ENCODE measurements at regions of chr10 and their contacts with region 1.

Region 1: DNA sequence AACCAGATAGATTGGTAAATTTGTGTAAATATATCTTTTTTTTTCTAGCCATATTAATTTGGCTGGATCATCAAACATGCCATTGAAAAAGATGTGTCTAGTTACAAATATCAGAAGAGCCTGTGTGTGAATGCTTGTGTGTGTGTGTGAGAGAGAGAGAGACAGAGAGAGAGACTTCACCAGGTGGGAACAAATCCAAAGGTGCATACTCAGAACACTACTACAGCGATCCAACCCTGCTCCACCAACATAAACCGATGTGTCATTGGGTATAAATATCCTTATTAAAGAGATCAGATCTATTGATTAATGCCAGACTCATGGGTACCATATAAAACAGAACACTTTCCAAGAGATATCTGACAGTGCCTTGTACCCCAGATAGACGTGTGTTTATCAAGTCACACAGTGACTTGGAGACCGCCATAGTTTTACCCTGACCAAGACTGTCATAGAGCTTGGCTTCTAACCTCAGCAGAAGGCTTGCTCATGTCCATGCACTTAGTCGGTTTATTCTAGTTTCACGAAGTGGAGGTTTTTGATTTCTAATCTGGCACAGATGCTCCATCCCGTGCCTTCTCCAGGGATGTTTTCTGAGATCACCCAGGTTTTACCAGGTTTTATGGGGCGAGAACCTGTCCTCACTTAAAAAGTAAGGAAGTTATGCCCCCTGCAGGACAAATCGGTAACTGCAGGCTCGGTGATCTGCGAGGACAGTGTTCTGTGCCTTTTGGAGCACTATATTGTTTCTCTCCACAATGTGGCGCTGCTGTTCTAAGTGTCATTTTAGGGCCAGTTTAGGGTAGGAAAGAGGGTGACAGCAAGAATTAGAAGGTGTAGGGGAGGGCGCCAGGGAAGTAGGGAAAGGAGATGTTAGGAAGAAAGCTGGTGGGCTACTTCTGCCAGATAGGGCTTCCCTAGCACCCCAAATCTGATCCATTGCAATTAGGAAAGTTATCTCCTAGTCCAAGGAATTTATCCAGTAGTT is 29.3 kb upstream of the WNT8B start:
- DNase-seq: peak; percentile 93
- H3K4me3 ChIP-seq: no peak overlapping the region
- H3K27ac ChIP-seq: no peak overlapping the region
- H3K4me1 ChIP-seq: no peaks in the 10 kb centered on the region
- H3K27me3 ChIP-seq: no peaks in the 10 kb centered on the region
- CTCF ChIP-seq: peak; percentile 98 to 100 (median 100)
- POLR2A ChIP-seq: no peak

Region 2: DNA sequence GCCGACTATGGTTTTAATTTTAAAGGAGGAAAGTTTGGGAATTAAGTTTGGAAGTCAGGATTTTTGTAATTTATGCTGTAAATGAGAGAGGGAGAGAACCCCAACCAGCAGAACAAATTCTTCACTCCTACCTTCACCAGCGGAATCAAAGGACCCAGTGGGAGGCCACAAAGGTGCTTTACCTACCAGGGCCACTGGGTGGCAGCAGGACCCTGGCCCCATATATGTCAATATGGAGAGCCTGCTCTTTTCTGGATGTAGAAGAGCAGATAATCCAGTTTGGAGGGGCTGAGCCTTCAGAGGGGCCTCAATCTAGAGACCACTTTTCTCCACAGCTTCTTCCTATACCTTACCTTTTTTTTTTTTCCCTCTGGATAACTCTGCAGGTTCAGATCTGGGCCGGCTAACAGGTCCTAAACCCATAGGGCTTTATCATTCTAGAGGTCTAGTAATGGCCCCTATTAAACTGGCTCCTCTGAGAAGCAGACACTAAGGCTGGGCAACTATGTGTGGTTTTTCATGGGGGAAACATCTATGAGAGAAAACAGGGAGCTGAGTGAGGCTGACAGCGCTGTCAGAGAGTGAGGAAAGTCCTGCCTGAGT is 95.0 kb before region 1 on chr10:
- intact Hi-C with region 1: loop called (anchors 2 kb)
- DNase-seq: peak; percentile 92
- H3K4me3 ChIP-seq: peak overlapping the region in 1 of 8 donors; percentile 36
- H3K27ac ChIP-seq: peak overlapping the region in 4 of 8 donors; percentile 10 to 79 (median 32)
- H3K4me1 ChIP-seq: peaks cover 5 to 42% (median 14%) of the 10 kb centered on the region in 6 donors
- H3K27me3 ChIP-seq: no peaks in the 10 kb centered on the region
- CTCF ChIP-seq: peak; percentile 76 to 96 (median 90)
- POLR2A ChIP-seq: no peak

Region 3: GRCh38 chr10:100508691-100509150 is 75.2 kb after region 1 on chr10:
- intact Hi-C with region 1: loop called (anchors 5 kb)
- DNase-seq: no peak
- H3K4me3 ChIP-seq: no peak overlapping the region
- H3K27ac ChIP-seq: peak overlapping the region in 3 of 8 donors; percentile 46 to 66 (median 50)
- H3K4me1 ChIP-seq: peaks cover 0 to 48% (median 20%) of the 10 kb centered on the region in 6 donors
- H3K27me3 ChIP-seq: no peaks in the 10 kb centered on the region
- CTCF ChIP-seq: peak in 9 of 11 experiments; percentile 28 to 69 (median 51)
- POLR2A ChIP-seq: no peak

Region 4: GRCh38 chr10:100518761-100519241 is 85.3 kb after region 1 on chr10:
- intact Hi-C with region 1: loop called (anchors 5 kb)
- DNase-seq: no peak
- H3K4me3 ChIP-seq: peak overlapping the region in 5 of 8 donors; percentile 26 to 65 (median 39)
- H3K27ac ChIP-seq: no peak overlapping the region
- H3K4me1 ChIP-seq: peaks cover 0 to 19% (median 16%) of the 10 kb centered on the region in 6 donors
- H3K27me3 ChIP-seq: peaks cover 0 to 12% (median 4%) of the 10 kb centered on the region in 7 donors
- CTCF ChIP-seq: peak; percentile 40 to 73 (median 64)
- POLR2A ChIP-seq: no peak

Measured in spleen (tissue), 13 donors.